ENCODE measurements at regions of chr3 and their contacts with region 1.

Region 1: DNA sequence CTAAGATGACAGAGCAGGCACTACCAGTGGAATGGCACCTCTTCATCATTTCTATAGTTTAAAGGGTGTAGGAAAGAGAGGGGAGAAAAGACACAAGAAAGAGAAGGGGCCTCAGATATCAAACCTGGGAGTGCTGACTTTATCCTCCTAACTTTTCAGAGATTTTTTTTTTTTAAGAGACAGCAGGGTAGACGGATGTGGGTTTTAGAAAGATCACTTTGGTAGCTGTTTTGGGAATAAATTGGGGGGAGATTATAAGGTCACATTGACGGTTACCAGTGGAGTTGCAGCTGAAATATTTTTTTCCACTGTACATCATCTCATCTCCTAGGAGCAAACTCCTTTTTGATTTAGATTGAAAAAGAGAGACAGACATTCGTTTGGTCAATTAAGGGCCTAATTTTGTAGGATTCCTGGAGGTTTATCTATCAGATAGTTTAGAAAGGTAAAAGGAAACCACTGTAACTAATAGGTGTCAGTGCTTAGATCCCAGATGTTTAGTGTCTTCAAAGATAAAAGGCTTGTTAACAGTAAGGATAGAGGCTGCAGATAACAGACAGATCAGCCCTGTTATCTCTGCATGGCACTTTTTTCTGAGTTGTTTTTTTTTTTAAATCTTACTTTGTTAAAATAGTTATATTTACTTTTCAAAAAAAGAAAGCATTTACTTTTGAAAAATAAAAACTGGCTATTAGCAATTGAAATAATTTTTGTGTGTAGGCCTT is 1057.0 kb downstream of the IGSF11 start:
- DNase-seq: no peak
- H3K4me3 ChIP-seq: no peak overlapping the region
- H3K27ac ChIP-seq: no peak overlapping the region
- H3K4me1 ChIP-seq: no peaks in the 10 kb centered on the region
- H3K27me3 ChIP-seq: no peaks in the 10 kb centered on the region
- CTCF ChIP-seq: no peak
- EP300 ChIP-seq: no peak
- POLR2A ChIP-seq: no peak

Region 2: DNA sequence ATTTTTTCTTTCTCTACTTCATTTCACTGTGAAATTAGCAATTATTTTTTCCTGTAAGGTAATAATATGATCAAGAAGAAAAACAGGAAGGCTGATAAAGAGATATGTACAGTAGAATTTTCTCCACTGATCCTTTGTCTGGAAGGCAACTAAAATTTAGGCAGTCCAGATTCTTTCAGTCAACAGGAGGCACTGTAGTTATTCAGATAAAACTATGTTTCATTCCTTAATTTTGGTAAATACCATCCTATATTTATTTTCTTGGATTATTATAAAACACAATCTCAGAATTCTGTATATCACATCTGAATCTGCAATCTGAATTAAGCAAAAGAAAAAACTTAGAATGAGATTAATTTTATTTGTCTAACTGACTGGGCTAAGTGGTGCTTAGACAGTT is 1875.6 kb before region 1 on chr3:
- in situ Hi-C with region 1: no loop called
- intact Hi-C with region 1: loop called (anchors 10 kb)
- DNase-seq: no peak
- H3K4me3 ChIP-seq: no peak overlapping the region
- H3K27ac ChIP-seq: no peak overlapping the region
- H3K4me1 ChIP-seq: no peaks in the 10 kb centered on the region
- H3K27me3 ChIP-seq: no peaks in the 10 kb centered on the region
- CTCF ChIP-seq: no peak
- EP300 ChIP-seq: no peak
- POLR2A ChIP-seq: no peak

Measured in transverse colon (tissue), 4 donors.